ENCODE measurements at regions of chr5 and their contacts with region 1.

Region 1: GRCh38 chr5:179795863-179796833 is 2.4 kb downstream of the LTC4S start:
- DNase-seq: peak; percentile 87
- ATAC-seq: peak; percentile 74 to 75

Region 2: DNA sequence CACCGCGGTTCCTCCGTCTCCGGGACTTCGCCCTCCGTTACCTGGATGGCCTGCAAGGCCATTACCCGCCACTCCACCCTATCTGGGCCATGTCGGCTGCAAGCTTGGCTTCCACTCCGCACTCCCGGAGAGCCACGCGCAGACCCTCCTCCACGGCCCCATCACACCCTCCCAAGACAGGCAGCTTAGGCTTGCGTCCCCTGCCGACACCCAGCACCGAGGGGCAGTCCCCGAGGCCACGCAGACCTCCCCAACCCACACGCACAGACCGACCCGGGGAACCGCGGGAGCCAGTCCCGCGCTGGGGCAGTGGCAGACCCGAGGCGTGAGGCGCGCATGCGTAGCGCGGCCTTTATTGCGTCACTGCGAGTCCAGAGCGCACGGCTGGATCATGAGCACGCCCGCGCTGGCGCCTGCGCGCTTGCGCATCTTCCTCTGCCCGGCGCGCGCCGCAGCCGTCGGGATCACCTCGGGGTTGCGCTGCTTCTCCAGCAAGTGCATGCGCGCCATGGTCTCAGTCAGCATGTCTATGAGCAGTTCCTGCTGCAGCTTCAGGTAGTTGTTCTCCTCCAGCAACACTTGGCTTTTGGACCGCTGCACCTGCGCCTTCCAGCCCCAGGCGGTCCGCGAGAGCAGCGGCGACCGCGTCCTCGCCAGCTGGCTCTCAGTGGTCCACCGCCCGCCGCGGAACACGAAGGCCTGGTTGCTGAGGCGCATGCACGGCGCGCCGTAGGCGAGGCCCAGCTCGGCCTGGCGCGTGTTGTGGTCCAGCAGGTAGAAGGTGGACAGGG is 117.7 kb before region 1 on chr5:
- intact Hi-C with region 1: loop called in 1 of 2 experiments (anchors 5 kb)
- DNase-seq: peak; percentile 98
- ATAC-seq: peak; percentile 97 to 98

Region 3: GRCh38 chr5:179763215-179763945 is 32.8 kb before region 1 on chr5:
- intact Hi-C with region 1: loop called in 1 of 2 experiments (anchors 2 kb)
- DNase-seq: peak; percentile 66
- ATAC-seq: peak; percentile 59 to 79

Region 4: DNA sequence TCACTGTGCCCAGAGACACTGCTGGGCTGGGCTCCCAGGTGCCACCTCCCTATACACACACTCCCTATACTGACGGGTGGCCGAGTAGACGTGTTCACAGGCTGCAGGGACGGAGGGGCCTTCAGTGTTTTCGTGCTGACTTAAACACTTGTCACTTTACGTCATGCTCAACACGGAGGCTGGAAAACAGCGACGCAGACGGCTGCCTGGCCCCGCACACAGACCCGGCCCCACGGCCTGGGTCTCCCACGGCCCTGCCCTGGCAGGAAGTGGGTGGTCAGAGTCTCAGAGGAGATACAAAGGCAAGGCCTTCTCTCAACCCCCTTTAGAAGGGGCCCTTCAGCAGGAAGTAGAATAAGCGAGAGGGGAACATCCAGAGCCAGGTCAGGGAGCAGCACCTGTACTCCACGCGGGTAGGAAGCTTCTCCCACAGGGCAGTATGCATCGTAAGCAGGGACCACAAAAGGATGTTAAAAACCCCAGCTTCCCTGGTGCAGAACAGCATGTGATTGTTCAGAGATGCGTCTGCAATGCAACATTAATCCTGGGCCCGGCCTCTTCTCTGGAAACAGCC is 123.4 kb after region 1 on chr5:
- intact Hi-C with region 1: no loop called
- DNase-seq: no peak
- ATAC-seq: no peak